ENCODE measurements at regions of chr15 and their contacts with region 1.

Region 1: DNA sequence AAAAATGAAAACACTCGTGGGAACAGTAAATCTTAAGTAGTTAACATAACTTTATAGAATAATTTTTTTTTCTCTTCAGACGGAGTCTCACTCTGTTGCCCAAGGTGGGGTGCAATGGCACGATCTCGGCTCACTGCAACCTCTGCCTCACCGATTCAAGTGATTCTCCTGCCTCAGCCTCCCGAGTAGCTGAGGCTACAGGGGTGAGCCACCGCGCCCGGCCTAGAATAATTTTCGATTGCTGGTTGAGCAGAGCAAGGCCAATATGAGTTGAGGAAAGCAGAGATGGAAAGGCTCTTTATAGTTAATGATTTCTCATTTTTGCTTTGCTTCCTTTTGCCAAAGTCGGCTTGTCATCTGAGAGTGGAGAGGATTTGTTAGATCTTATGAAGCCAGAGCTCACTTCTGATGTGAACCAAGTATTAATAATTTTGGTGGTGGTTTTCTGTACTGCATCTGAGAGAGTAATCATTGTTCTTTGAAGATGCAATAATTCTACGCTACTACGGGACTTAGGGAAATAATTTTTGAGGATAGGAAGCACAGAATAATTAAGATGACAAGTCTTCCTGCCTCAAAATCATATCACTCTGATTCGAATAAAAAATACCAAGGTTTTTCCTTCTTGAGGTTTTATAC is 1.6 kb upstream of the GOLM2 start:
- DNase-seq: no peak
- ATAC-seq: no peak
- H3K4me3 Mint-ChIP-seq: peak overlapping the region; percentile 92
- H3K27ac Mint-ChIP-seq: peak overlapping the region; percentile 99
- H3K4me1 Mint-ChIP-seq: peaks cover 28% of the 10 kb centered on the region
- H3K27me3 Mint-ChIP-seq: no peaks in the 10 kb centered on the region

Region 2: DNA sequence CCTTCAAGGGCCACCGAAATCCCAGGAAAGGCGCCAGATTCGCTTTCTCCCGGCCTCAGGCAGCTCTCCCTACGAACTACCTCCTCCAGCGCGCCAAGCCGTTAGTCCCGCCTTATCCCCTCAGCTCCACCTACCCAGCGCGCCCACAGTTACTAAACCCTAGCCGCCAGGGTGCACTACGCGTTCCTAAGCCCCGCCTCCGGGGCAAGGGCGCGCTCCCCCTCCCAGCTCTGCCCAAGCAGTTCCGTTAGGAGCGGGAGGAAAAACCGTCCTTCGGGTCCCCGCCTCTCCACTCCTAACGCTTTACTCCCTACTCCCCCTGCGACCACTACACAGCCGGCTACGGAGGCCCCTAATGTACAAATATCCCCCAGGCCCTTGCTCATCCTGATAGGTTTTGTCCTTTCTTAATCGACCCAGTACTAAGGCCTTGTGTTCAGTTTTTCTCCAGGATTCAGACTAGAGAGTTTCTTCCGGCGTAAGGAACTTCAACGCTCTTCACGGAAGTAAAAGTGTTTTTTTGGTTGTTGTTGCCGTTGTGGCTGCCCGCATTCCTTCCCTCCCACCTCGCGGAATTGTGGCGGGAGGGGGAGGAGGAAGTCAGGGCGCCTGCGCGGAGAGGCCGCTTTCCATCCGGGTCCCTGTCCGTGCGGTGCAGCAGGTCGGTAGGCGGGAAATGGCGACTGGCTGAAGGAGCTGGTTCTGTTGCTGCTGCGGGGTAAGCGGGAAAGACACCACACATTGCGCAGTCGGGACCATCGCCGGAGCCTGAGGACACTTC is 140.2 kb after region 1 on chr15 and contains the start of gene CTDSPL2:
- POLR2A ChIA-PET with region 1: interaction called, 62 read pairs
- DNase-seq: peak; percentile 95
- ATAC-seq: peak; percentile 97
- H3K4me3 Mint-ChIP-seq: peak within 1 kb of the TSS; percentile 91
- H3K27ac Mint-ChIP-seq: peak within 1 kb of the TSS; percentile 96
- H3K4me1 Mint-ChIP-seq: peaks cover 29% of the 10 kb centered on the region
- H3K27me3 Mint-ChIP-seq: no peaks in the 10 kb centered on the region
- total RNA-seq, gene CTDSPL2: 82.9 to 87.5 TPM

Measured in activated naive CD8-positive, alpha-beta T cell treated with anti-CD3 and anti-CD28 coated beads, Interleukin-2, amount 10 ng/mL, durations not matched to agents 7 days and 5 days (primary cell).